ENCODE measurements at regions of chr1 and their contacts with region 1.

Region 1: GRCh38 chr1:14835725-14836124 is 237.2 kb downstream of the KAZN start:
- DNase-seq: no peak
- H3K4me3 ChIP-seq: no peak overlapping the region
- H3K4me1 ChIP-seq: no peaks in the 10 kb centered on the region
- H3K27me3 ChIP-seq: no peaks in the 10 kb centered on the region

Region 2: GRCh38 chr1:14894811-14895560 is 59.3 kb after region 1 on chr1:
- in situ Hi-C with region 1: loop called (anchors 10 kb)
- DNase-seq: no peak
- H3K4me3 ChIP-seq: no peak overlapping the region
- H3K4me1 ChIP-seq: no peaks in the 10 kb centered on the region
- H3K27me3 ChIP-seq: peaks cover 5% of the 10 kb centered on the region; the same call in 1 of the 2 replicates

Region 3: GRCh38 chr1:14945132-14946016 is 109.6 kb after region 1 on chr1:
- in situ Hi-C with region 1: no loop called
- DNase-seq: no peak
- H3K4me3 ChIP-seq: no peak overlapping the region
- H3K4me1 ChIP-seq: no peaks in the 10 kb centered on the region
- H3K27me3 ChIP-seq: no peaks in the 10 kb centered on the region